A673 (cell line): ENCODE measurements at regions of chr12 and their contacts with region 1.

Region 1: DNA sequence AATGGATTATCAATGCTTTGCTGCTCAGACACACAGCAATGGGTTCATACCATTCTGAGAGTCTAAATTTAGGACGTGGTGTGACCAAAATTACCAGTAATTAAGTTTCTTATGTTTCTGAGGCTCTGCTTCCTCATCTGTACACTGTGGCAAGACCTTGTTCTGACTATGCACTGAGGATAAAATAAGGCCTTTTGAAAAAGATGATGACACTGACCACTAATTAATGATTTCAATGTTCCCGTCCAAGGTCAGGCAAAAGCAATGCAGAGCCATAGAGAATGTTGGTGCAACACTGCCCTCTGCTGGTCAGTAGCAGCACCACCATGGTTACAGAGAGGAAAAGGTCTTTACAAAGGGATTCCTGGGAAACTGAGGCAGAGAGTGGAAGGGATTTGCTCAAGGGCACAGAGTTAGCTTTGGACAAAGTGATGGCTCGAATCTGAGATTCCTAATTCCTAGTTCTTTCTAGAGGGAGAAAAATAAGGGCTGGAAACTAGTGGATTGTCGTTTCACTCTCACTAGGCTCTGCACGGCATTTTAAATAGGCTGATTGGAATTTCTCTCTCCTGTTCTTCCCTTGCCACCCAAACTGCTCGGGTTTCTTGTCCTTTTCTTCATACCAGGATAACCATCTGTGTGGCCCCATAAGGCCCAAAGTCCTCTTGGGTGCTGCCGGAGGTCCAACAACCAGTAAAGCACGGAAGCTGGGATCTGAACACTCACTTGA is 22.3 kb upstream of the P2RX7 start:
- DNase-seq: peak; percentile 69
- H3K4me3 ChIP-seq: no peak overlapping the region
- H3K27ac ChIP-seq: no peak overlapping the region
- H3K4me1 ChIP-seq: no peaks in the 10 kb centered on the region
- H3K27me3 ChIP-seq: no peaks in the 10 kb centered on the region
- CTCF ChIP-seq: peak; percentile 98

Region 2: DNA sequence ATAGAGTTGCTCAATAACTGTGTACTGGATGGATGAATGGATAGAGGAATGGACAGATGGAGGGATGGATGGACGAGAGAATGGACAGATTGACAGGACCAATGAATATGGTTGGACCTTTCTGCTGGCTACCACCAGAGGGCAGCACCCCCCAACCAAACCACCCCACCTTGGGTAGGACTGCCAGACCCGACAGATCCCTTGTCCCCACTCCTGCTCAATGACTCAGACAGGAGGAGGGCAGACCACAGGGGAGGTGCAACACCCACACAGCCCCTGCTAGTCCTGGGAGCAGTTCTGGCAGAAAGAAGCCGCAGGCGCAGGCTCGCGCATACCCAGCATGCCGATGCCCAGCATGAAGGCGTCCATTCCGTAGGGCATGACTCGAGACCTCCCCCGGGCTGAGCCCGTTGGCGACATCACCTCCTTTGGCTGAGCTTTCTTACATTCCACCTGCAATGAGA is 753.8 kb before region 1 on chr12:
- CTCF ChIA-PET with region 1: no interaction called
- POLR2A ChIA-PET with region 1: no interaction called
- intact Hi-C with region 1: loop called (anchors 10 kb)
- DNase-seq: peak; percentile 91
- H3K4me3 ChIP-seq: peak overlapping the region; percentile 20
- H3K27ac ChIP-seq: no peak overlapping the region
- H3K4me1 ChIP-seq: peaks cover 5% of the 10 kb centered on the region
- H3K27me3 ChIP-seq: no peaks in the 10 kb centered on the region
- CTCF ChIP-seq: peak; percentile 92

Region 3: DNA sequence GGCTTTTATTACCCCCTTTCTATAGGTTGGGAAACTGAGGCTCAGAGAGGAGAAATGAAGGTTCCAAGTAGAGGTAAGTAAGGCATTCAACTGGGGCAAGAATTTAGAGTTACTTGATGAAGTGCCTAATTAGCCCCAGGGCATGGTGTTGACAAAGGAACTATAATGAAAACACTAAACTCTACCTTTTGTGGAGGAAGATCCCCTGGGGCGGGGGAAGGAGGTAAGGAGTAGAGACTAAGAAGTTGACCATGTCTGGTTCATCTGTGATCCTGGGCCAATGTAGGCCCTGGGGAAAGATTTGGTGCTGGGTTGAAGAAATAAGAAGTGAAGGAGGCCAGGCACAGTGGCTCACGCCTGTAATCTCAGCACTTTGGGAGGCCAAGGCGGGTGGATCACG is 688.7 kb before region 1 on chr12:
- CTCF ChIA-PET with region 1: no interaction called
- POLR2A ChIA-PET with region 1: no interaction called
- intact Hi-C with region 1: no loop called
- DNase-seq: peak; percentile 46
- H3K4me3 ChIP-seq: no peak overlapping the region
- H3K27ac ChIP-seq: no peak overlapping the region
- H3K4me1 ChIP-seq: no peaks in the 10 kb centered on the region
- H3K27me3 ChIP-seq: no peaks in the 10 kb centered on the region
- CTCF ChIP-seq: no peak

Region 4: DNA sequence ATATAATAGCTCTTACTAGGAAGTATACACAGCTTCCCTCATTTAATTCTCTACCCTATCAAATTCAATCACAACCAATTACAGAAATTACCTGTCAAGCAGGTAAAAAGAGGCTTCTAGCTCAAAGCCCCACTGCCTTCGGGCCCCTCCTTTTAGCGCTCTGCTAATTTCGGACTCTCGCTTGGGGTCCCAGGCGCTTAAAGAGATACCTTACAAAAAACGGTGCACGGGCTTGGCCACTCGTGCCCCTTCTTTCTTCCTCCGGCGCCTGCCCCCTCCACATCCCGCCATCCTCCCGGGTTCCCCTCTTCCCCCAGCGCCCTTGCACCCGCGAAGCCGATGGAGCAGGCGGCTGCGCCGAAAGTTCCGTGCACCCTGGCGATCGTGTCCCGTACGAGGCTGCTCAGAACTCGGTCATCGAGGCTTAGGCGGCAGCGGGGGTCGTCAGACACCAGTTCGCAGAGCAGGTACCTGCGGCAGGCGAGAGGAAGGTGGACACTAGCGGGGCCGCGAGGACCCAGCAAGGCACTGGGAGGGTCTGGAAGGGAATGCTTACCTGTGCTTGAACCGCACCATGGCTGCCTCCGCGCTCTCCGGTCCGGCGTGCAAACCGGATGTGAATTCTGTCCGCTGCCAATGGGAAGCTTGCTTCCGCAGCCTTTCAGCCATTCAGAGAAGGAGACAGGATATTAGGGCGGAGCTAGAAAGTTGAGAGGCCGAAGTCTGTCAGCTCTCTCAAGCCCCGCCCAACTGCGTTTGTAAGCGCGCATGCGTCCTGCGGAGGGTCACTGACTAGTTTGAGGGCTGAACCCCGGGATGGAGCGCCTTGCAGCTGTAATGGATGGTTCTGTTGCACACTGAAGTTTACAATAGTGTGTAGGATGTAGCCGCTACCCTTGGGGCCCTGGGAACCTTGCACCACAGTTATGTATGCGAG is 529.3 kb before region 1 on chr12 and contains the start of gene POP5:
- CTCF ChIA-PET with region 1: no interaction called
- POLR2A ChIA-PET with region 1: no interaction called
- intact Hi-C with region 1: loop called (anchors 5 kb)
- DNase-seq: peak; percentile 99
- H3K4me3 ChIP-seq: peak within 1 kb of the TSS; percentile 89
- H3K27ac ChIP-seq: peak within 1 kb of the TSS; percentile 59
- H3K4me1 ChIP-seq: peaks cover 10% of the 10 kb centered on the region
- H3K27me3 ChIP-seq: no peaks in the 10 kb centered on the region
- CTCF ChIP-seq: no peak
- total RNA-seq, gene POP5: 41.0 and 42.4 TPM in 2 replicates

Region 5: GRCh38 chr12:121128970-121129810 is 18.8 kb after region 1 on chr12:
- CTCF ChIA-PET with region 1: no interaction called
- POLR2A ChIA-PET with region 1: no interaction called
- intact Hi-C with region 1: no loop called
- DNase-seq: peak; percentile 79
- H3K4me3 ChIP-seq: no peak overlapping the region
- H3K27ac ChIP-seq: no peak overlapping the region
- H3K4me1 ChIP-seq: no peaks in the 10 kb centered on the region
- H3K27me3 ChIP-seq: no peaks in the 10 kb centered on the region
- CTCF ChIP-seq: no peak

Region 6: DNA sequence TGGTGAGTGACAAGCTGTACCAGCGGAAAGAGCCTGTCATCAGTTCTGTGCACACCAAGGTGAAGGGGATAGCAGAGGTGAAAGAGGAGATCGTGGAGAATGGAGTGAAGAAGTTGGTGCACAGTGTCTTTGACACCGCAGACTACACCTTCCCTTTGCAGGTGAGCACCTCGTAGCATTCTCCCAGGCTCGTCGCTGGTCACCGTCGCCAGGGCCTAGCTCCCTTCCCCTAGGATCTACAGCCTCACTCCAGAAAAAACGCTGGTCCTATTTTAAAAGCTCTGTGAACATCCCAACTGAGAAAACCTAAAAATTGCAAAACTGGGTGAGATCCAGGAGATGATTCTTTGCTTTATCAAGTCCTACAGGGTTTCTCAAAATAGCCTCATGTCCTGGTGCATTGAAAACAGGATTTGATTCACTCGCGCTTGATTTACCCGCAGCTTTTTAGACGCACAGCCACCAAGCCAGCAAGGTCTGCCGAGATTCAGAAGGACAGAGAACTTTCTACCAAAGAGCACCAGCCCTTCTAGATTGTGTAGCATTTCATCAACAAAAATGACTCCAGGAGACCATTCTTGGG is 44.5 kb after region 1 on chr12:
- CTCF ChIA-PET with region 1: interaction called, 10 read pairs
- POLR2A ChIA-PET with region 1: no interaction called
- intact Hi-C with region 1: no loop called
- DNase-seq: no peak
- H3K4me3 ChIP-seq: no peak overlapping the region
- H3K27ac ChIP-seq: no peak overlapping the region
- H3K4me1 ChIP-seq: no peaks in the 10 kb centered on the region
- H3K27me3 ChIP-seq: no peaks in the 10 kb centered on the region
- CTCF ChIP-seq: no peak

Region 7: DNA sequence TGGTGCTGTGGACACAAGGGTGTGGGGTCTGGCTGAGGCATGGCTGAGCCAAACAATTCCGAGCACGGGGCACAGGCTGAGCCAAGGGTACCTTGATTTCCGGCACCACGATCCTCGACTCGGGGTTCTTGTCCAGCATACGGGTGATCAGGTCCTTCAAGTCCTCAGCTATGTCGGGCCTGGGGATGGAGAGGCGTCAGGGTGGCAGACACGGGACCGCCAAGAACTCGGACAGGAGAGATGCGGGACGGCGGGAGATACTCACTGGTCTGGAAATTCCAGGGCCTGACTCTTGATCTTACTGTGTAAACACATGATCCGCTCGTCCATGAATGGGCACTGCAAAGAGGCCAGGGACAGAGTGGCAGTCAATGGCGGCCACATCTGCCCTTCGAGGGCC is 139.3 kb after region 1 on chr12:
- CTCF ChIA-PET with region 1: no interaction called
- POLR2A ChIA-PET with region 1: interaction called, 18 read pairs
- intact Hi-C with region 1: no loop called
- DNase-seq: no peak
- H3K4me3 ChIP-seq: no peak overlapping the region
- H3K27ac ChIP-seq: no peak overlapping the region
- H3K4me1 ChIP-seq: no peaks in the 10 kb centered on the region
- H3K27me3 ChIP-seq: no peaks in the 10 kb centered on the region
- CTCF ChIP-seq: no peak